ENCODE measurements at regions of chr5 and their contacts with region 1.

Region 1: DNA sequence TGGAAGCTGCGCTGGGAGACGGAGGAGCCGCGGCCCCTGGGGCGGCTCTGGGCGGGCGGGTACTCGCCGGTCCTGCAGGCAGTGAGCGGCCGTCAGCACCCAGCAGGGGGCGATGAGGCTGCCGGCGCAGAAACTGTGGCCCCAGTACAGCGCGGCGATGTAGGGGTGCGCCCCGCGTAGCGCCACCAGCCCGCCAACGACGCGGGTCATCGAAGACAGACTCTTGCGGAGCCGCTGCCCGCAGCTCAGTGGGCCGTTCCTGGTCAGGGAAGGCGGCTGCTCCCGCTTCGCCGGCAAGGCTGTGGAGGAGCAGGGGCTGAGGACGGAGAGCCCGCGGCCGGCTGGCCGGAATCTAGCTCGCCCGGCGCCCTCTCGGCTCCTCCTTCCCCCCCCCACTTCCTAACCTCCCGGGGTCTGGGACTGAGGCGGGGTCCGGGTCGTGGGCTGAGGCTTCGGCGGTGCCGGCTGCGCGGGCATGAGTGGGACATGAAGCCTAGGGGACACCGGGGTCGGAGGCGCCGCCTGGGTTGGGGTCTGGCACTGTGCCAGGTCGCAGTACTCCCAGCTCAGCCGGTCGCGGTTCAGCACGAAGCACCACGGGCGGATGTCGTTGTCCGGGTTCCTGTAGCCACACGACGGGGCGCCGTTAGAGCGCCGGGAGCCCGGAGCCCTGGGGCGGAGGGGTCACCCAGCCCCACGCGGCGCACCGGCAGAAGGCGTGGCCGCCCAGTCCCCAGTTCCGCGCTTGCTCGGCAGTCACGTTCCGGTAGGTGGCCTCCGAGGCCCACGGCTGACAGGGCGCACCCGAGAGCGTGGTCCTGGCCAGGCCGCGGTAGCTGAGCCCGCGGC is 3.6 kb upstream of the PFN3 start:
- DNase-seq: no peak
- H3K4me3 ChIP-seq: peak overlapping the region; percentile 49
- H3K27me3 ChIP-seq: peaks cover 32% of the 10 kb centered on the region
- CTCF ChIP-seq: peak; percentile 78

Region 2: DNA sequence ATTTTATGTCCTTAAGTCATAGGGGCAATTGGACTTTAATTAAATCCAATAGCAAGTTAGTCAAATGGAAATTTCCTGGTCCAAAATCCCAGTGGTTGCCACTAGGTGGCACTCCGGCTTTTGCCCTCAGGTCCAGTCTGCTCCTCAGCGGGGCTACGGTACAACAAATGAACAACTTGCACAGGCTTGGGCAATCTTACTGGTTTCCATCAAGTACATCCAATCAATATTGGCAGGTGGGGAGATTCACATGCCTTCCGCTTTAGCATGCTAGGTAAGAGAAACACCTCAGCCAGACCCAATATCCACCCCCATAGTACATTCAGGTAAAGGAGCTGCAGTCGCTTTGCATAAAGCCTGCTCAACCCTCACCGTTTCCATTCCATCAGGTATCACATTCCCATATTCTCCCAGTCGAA is 86.0 kb before region 1 on chr5:
- CTCF ChIA-PET with region 1: interaction called, 16 read pairs
- POLR2A ChIA-PET with region 1: no interaction called
- DNase-seq: no peak
- H3K4me3 ChIP-seq: no peak overlapping the region
- H3K27me3 ChIP-seq: no peaks in the 10 kb centered on the region
- CTCF ChIP-seq: peak; percentile 92

Region 3: DNA sequence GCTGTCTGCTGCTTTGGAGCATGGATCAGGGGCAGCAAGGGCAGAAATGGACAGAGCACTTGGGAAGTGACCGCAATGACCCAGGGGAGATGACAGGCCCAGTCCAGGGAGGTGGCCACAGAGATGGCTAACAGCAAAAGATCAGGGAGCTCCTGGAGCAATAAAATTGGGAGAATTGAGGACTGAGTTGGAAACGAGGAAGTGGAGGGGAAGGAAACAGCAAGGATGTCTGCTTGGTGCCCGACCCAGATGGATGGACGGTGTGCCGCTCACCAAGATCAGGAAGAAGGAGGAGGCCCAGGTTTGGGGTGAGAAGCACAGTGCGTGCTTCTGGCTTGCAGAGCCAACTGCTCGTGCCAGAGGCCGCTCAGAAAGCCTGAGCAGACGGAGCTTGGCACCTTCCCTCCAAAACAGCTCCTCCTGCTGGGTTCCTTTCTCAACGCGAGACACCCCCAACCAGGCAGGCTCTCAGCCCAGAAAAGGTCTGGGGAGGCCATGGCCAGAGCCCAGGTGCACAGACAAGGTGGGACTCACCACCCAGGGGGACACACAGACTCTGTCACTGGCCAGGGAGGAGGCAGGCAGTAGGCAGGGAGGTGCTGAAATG is 21.5 kb before region 1 on chr5:
- CTCF ChIA-PET with region 1: interaction called, 15 read pairs
- POLR2A ChIA-PET with region 1: no interaction called
- DNase-seq: no peak
- H3K4me3 ChIP-seq: no peak overlapping the region
- H3K27me3 ChIP-seq: peaks cover 25% of the 10 kb centered on the region
- CTCF ChIP-seq: peak; percentile 41; the same call in 1 of the 2 replicates

Region 4: GRCh38 chr5:177425801-177426565 is 22.0 kb after region 1 on chr5:
- CTCF ChIA-PET with region 1: interaction called, 48 read pairs
- POLR2A ChIA-PET with region 1: no interaction called
- DNase-seq: peak; percentile 100
- H3K4me3 ChIP-seq: peak overlapping the region; percentile 49
- H3K27me3 ChIP-seq: no peaks in the 10 kb centered on the region
- CTCF ChIP-seq: no peak

Region 5: DNA sequence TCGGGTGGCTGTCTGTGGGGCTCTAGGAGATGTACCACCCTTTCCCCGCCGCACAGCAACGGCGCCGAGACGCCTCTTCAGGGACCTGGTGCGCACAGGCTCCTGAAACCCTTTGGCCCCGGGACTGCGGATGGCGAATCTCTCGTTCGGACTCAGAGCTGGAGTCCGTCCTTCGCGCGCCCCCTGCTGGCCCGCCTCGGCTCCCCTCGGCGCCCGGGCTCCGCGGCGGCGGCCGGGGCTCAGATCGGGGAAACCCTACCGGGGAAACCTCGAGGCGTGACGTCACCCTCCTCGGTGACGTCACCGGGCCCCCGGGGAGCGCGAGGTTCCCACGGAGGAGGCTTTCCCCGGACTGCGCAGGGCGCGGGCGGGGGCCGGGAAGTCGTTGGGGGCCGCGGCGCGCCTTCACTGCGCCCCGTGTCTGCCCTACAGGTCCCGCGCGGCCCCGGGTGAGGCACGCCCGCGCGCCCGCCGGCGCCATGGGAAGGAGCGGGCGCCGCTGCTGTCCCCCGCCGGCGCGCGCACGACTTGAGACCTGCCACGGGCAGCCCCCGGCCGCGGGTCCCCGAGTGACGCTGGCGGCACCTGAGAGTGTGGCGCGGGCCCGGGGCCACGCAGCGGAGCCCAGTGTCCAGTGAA is 50.5 kb after region 1 on chr5:
- CTCF ChIA-PET with region 1: interaction called, 352 read pairs
- POLR2A ChIA-PET with region 1: interaction called, 3 read pairs
- DNase-seq: no peak
- H3K4me3 ChIP-seq: peak overlapping the region; percentile 41
- H3K27me3 ChIP-seq: no peaks in the 10 kb centered on the region
- CTCF ChIP-seq: peak; percentile 62